Activated CD4-positive, alpha-beta T cell treated with anti-CD3 and anti-CD28 coated beads for 36 hours (primary cell): ENCODE measurements at regions of chr10 and their contacts with region 1.

Region 1: GRCh38 chr10:18214691-18215563 is 74.7 kb downstream of the CACNB2 start:
- DNase-seq: peak; percentile 45
- ATAC-seq: peak; percentile 36
- H3K4me3 Mint-ChIP-seq: no peak overlapping the region
- H3K27ac Mint-ChIP-seq: no peak overlapping the region
- H3K4me1 Mint-ChIP-seq: no peaks in the 10 kb centered on the region
- H3K27me3 Mint-ChIP-seq: peaks cover 2% of the 10 kb centered on the region

Region 2: GRCh38 chr10:17742918-17743317 is 472.0 kb before region 1 on chr10:
- CTCF ChIA-PET with region 1: no interaction called
- POLR2A ChIA-PET with region 1: no interaction called
- intact Hi-C with region 1: loop called in 1 of 2 experiments (anchors 5 kb)
- DNase-seq: peak; percentile 83
- ATAC-seq: peak; percentile 30
- H3K4me3 Mint-ChIP-seq: no peak overlapping the region
- H3K27ac Mint-ChIP-seq: no peak overlapping the region
- H3K4me1 Mint-ChIP-seq: peaks cover 5% of the 10 kb centered on the region
- H3K27me3 Mint-ChIP-seq: no peaks in the 10 kb centered on the region

Region 3: DNA sequence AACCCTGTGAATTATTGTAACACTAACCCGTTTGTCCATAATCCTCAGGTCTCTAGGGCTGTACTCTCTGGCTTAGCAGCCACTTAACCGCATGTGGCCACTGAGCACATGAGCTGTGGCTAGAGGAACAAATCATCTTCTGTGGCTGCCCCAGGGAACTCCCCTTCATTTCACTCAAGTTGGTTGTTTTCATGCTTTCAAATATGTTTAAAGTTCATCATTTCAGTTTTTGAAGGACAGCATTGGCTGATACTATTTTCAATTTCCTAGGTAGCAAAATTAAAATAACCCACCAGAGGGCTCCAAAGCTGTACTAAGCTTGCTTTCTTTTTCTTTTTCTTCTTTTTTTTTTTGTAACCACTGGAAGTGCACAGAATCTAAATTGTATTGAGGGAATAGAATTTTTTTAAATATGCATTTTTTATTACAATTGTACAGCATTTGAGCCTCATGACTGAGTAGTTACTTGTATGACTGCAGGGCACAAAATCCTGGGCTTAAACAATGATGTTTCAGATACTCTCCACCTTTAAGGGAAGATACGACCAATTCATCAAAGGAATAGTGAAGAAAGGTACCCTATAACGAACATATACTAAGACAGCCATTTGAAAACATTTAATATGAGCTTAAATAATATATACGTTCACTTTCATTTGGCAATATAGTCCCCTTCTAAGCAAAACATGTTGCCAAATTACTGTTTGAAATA is 367.2 kb before region 1 on chr10:
- CTCF ChIA-PET with region 1: no interaction called
- POLR2A ChIA-PET with region 1: no interaction called
- intact Hi-C with region 1: loop called (anchors 2 to 10 kb)
- DNase-seq: no peak
- ATAC-seq: peak; percentile 19
- H3K4me3 Mint-ChIP-seq: no peak overlapping the region
- H3K27ac Mint-ChIP-seq: no peak overlapping the region
- H3K4me1 Mint-ChIP-seq: no peaks in the 10 kb centered on the region
- H3K27me3 Mint-ChIP-seq: peaks cover 3% of the 10 kb centered on the region

Region 4: GRCh38 chr10:17910125-17910789 is 304.7 kb before region 1 on chr10:
- CTCF ChIA-PET with region 1: no interaction called
- POLR2A ChIA-PET with region 1: no interaction called
- intact Hi-C with region 1: loop called in 1 of 2 experiments (anchors 2 kb)
- DNase-seq: peak; percentile 26
- ATAC-seq: no peak
- H3K4me3 Mint-ChIP-seq: no peak overlapping the region
- H3K27ac Mint-ChIP-seq: no peak overlapping the region
- H3K4me1 Mint-ChIP-seq: no peaks in the 10 kb centered on the region
- H3K27me3 Mint-ChIP-seq: peaks cover 2% of the 10 kb centered on the region